B cell (primary cell): ENCODE measurements at regions of chr15 and their contacts with region 1.

Region 1: GRCh38 chr15:60520825-60521368 is 42.0 kb upstream of the ICE2 start:
- DNase-seq: peak; percentile 79
- ATAC-seq: peak; percentile 85
- H3K4me3 ChIP-seq: no peak overlapping the region
- H3K4me3 Mint-ChIP-seq: peak overlapping the region; percentile 40
- H3K27ac ChIP-seq: no peak overlapping the region
- H3K27ac Mint-ChIP-seq: no peak overlapping the region
- H3K4me1 ChIP-seq: peaks cover 8 to 9% of the 10 kb centered on the region in 2 donors
- H3K4me1 Mint-ChIP-seq: peaks cover 13% of the 10 kb centered on the region
- H3K27me3 ChIP-seq: no peaks in the 10 kb centered on the region
- H3K27me3 Mint-ChIP-seq: no peaks in the 10 kb centered on the region
- CTCF ChIP-seq: peak; percentile 98

Region 2: DNA sequence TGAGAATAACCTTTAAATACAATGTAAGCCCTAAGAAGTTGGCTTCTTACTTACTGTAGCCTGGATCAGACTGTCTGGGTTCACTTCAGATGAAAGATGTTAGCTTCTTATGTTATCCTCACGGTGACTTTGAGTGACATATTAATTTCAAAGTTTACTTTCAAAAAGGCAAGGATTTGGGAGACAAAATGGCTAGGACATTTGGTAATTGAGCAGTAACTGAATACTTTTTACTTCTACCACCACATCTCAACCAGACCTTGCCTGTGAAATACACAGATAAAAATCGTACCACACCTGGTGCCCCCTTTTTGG is 795.8 kb before region 1 on chr15:
- CTCF ChIA-PET with region 1: interaction called, 16 read pairs
- POLR2A ChIA-PET with region 1: no interaction called
- intact Hi-C with region 1: no loop called
- DNase-seq: no peak
- ATAC-seq: no peak
- H3K4me3 ChIP-seq: no peak overlapping the region
- H3K4me3 Mint-ChIP-seq: no peak overlapping the region
- H3K27ac ChIP-seq: no peak overlapping the region
- H3K27ac Mint-ChIP-seq: no peak overlapping the region
- H3K4me1 ChIP-seq: no peaks in the 10 kb centered on the region
- H3K4me1 Mint-ChIP-seq: no peaks in the 10 kb centered on the region
- H3K27me3 ChIP-seq: peaks cover 0 to 5% (median 2%) of the 10 kb centered on the region in 4 experiments
- H3K27me3 Mint-ChIP-seq: peaks cover 26% of the 10 kb centered on the region
- CTCF ChIP-seq: no peak

Region 3: GRCh38 chr15:60299452-60300047 is 221.3 kb before region 1 on chr15:
- CTCF ChIA-PET with region 1: no interaction called
- POLR2A ChIA-PET with region 1: no interaction called
- intact Hi-C with region 1: no loop called
- DNase-seq: no peak
- ATAC-seq: no peak
- H3K4me3 ChIP-seq: no peak overlapping the region
- H3K4me3 Mint-ChIP-seq: no peak overlapping the region
- H3K27ac ChIP-seq: no peak overlapping the region
- H3K27ac Mint-ChIP-seq: no peak overlapping the region
- H3K4me1 ChIP-seq: no peaks in the 10 kb centered on the region
- H3K4me1 Mint-ChIP-seq: no peaks in the 10 kb centered on the region
- H3K27me3 ChIP-seq: peaks cover 0 to 3% (median 0%) of the 10 kb centered on the region in 4 experiments
- H3K27me3 Mint-ChIP-seq: no peaks in the 10 kb centered on the region
- CTCF ChIP-seq: no peak

Region 4: DNA sequence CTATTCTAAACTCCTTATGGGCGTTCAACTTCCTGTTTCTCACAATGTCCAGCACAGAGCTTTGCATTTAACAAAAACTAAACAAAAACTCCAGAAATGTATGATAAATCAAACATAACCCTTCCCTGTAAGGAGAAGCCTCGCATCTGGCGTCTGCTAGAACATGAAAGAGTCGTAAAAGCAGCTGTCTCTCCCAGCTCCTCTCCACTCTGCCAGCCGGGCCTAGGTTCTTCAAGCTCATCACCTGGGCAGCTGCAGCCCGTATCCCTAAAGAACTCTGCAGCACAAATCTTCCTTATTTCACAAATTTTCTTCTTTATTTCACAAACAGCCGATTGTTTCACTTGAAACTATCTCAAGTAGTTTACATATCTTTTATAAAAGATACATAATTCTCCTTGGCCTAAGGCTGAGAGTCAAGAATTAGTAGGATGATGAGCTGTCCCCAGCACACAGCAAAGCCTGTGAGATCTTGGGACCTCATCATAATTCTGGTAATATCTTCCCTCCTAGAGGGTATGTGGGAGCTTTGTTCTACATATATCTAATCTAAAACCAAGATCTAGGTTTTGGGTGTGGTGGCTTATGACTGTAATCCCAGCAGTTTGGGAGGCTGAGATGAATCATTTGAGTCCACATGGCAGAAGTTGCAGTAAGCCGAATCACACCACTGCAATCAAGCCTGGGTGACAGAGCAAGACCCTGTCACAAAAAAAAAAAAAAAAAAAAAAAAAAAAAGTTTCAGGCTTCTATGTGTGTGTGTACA is 158.4 kb before region 1 on chr15:
- CTCF ChIA-PET with region 1: interaction called, 150 read pairs
- POLR2A ChIA-PET with region 1: no interaction called
- intact Hi-C with region 1: no loop called
- DNase-seq: no peak
- ATAC-seq: no peak
- H3K4me3 ChIP-seq: no peak overlapping the region
- H3K4me3 Mint-ChIP-seq: no peak overlapping the region
- H3K27ac ChIP-seq: no peak overlapping the region
- H3K27ac Mint-ChIP-seq: peak overlapping the region; percentile 22
- H3K4me1 ChIP-seq: no peaks in the 10 kb centered on the region
- H3K4me1 Mint-ChIP-seq: no peaks in the 10 kb centered on the region
- H3K27me3 ChIP-seq: no peaks in the 10 kb centered on the region
- H3K27me3 Mint-ChIP-seq: no peaks in the 10 kb centered on the region
- CTCF ChIP-seq: no peak

Region 5: DNA sequence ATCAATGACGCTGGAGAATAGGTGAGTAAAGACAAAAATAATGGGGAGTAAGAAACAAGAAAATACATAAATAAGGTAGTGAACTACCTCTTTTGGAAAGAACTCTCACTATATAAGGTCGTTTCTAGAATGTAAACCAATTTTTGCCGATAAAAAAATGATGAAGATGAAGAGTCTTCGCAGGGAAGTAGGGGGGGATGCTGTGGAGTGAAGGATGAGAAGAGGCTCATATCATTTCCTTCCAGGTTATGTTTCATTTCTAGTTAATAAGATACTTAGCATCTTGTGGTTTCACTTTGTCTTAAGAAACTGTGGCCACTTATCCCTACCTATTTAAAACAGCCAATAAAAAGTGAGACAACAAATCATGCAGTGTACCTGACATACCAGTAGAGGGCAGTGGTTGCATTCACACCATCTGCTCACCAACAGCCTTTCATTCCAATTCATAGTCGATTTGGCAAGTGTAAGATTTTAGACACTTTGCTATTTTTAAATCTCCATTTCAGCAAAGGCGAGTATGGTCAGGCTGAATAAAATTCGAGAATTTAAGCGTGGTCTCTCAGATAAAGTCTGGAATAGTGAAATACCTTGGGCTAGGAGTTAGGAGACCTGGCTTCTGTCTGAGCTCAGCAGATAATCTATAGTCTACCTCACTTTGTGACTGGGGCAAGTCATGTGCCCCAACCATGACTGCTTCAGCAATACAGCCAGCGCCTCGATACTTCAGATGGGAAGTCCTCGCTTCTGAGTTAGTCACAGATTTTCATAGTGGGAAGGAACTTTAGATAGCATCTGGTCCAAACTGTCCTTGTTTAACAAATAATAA is 13.1 kb before region 1 on chr15:
- CTCF ChIA-PET with region 1: interaction called, 158 read pairs
- POLR2A ChIA-PET with region 1: no interaction called
- intact Hi-C with region 1: loop called (anchors 1 kb)
- DNase-seq: peak; percentile 81
- ATAC-seq: peak; percentile 98
- H3K4me3 ChIP-seq: no peak overlapping the region
- H3K4me3 Mint-ChIP-seq: peak overlapping the region; percentile 52
- H3K27ac ChIP-seq: peak overlapping the region in 1 of 2 donors; percentile 53
- H3K27ac Mint-ChIP-seq: peak overlapping the region; percentile 62
- H3K4me1 ChIP-seq: peaks cover 0 to 8% of the 10 kb centered on the region in 2 donors
- H3K4me1 Mint-ChIP-seq: peaks cover 14% of the 10 kb centered on the region
- H3K27me3 ChIP-seq: no peaks in the 10 kb centered on the region
- H3K27me3 Mint-ChIP-seq: no peaks in the 10 kb centered on the region
- CTCF ChIP-seq: peak; percentile 94

Region 6: GRCh38 chr15:60548101-60548500 is 27.2 kb after region 1 on chr15:
- CTCF ChIA-PET with region 1: interaction called, 11 read pairs
- POLR2A ChIA-PET with region 1: no interaction called
- intact Hi-C with region 1: no loop called
- DNase-seq: no peak
- ATAC-seq: no peak
- H3K4me3 ChIP-seq: no peak overlapping the region
- H3K4me3 Mint-ChIP-seq: no peak overlapping the region
- H3K27ac ChIP-seq: no peak overlapping the region
- H3K27ac Mint-ChIP-seq: no peak overlapping the region
- H3K4me1 ChIP-seq: no peaks in the 10 kb centered on the region
- H3K4me1 Mint-ChIP-seq: no peaks in the 10 kb centered on the region
- H3K27me3 ChIP-seq: no peaks in the 10 kb centered on the region
- H3K27me3 Mint-ChIP-seq: no peaks in the 10 kb centered on the region
- CTCF ChIP-seq: no peak

Region 7: DNA sequence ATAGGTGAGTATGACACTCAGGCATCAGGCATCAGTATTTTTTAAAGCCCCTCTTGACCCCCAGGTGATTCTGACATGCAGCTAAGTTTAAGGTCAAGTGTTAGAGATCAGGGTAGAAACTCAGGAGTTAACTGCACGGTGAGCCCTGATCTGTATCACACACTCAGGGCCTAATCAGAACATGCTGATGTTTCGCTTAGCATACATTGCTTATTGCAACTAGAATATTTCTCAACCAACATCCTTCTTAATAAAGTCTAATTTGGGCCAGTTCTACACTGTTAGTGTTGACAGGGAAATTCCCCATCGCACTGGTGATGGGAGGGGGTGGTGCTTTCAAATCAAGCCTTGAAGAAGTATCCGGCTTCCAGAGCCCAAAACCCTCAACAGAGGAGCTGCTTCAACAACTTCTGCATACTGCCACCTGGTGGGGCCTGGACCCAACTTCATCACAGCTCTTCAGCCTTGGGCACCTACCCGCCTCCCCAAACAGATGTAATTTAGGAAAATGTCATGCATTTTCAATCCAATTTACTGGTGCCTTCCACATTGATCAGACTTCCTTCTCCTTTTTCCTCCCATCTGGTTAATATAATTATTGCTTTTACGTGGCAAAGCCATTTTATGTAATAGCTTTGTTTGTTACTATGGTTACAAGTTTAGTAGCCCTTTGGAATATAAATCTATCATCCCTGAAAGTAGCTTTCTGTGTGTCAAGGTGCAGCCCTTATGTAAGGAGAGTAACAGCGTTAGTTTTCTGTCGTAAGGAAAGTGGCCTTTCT is 396.0 kb after region 1 on chr15:
- CTCF ChIA-PET with region 1: interaction called, 14 read pairs
- POLR2A ChIA-PET with region 1: no interaction called
- intact Hi-C with region 1: no loop called
- DNase-seq: peak; percentile 86
- ATAC-seq: peak; percentile 95
- H3K4me3 ChIP-seq: no peak overlapping the region
- H3K4me3 Mint-ChIP-seq: no peak overlapping the region
- H3K27ac ChIP-seq: peak overlapping the region in 1 of 2 donors; percentile 12
- H3K27ac Mint-ChIP-seq: no peak overlapping the region
- H3K4me1 ChIP-seq: peaks cover 11 to 13% of the 10 kb centered on the region in 2 donors
- H3K4me1 Mint-ChIP-seq: peaks cover 14% of the 10 kb centered on the region
- H3K27me3 ChIP-seq: peaks cover 0 to 2% (median 0%) of the 10 kb centered on the region in 4 experiments
- H3K27me3 Mint-ChIP-seq: no peaks in the 10 kb centered on the region
- CTCF ChIP-seq: peak; percentile 86